Aorta (tissue), 5 donors: ENCODE measurements at regions of chr17 and their contacts with region 1.

Region 1: DNA sequence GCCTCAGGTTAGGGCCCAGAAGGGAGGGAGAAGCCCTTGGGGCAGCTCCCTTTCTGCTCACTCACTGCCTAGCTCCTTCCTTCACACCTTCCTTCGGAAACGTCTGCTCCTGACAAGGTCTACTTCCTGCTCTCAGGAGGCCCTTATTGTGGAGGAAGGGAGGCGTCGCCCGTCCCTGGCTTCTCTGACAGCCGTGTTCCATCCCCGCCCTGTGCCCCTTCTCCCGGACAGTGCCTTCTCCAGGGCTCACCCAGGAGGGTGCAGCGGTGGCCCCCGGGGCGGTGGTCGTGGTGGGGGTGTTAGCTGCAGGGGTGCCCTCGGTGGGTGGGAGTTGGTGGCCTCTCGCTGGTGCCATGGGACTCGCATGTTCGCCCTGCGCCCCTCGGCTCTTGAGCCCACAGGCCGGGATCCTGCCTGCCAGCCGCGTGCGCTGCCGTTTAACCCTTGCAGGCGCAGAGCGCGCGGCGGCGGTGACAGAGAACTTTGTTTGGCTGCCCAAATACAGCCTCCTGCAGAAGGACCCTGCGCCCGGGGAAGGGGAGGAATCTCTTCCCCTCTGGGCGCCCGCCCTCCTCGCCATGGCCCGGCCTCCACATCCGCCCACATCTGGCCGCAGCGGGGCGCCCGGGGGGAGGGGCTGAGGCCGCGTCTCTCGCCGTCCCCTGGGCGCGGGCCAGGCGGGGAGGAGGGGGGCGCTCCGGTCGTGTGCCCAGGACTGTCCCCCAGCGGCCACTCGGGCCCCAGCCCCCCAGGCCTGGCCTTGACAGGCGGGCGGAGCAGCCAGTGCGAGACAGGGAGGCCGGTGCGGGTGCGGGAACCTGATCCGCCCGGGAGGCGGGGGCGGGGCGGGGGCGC is 231.9 kb downstream of the SEC14L1 start:
- DNase-seq: peak; percentile 92 to 95
- ATAC-seq: peak; percentile 79
- H3K4me3 ChIP-seq: peak overlapping the region; percentile 62 to 83
- H3K27ac ChIP-seq: peak overlapping the region; percentile 14 to 56
- H3K4me1 ChIP-seq: peaks cover 0 to 3% of the 10 kb centered on the region in 2 donors
- H3K27me3 ChIP-seq: no peaks in the 10 kb centered on the region

Region 2: DNA sequence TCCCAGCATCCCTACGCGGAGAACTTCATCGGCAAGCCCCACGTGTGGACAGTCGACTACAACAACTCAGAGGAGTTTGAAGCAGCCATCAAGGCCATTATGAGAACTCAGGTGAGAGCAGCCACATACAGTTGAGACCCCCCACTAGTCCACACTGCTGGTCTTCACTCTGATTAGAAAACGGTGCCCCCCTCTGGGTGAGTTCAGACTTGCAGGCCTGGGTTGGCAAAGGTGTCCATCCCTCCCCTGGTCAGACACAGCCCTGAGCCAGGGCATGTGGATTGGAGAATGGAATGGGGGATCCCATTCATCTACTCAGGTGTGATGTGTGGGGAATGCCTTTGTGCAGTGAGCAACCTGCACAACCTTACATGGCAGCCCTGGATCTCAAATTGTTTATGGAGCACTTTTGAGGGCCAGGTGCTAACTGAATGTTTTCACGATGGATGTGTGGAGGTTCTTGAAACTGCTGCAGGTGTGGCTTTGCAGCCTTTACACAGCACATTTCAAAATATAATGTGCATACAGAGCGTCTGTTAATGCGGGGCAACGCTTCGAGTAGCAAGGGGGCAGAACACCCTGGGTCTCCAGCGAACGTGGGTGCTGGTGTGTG is 431.8 kb before region 1 on chr17:
- intact Hi-C with region 1: no loop called
- DNase-seq: no peak
- ATAC-seq: no peak
- H3K4me3 ChIP-seq: no peak overlapping the region
- H3K27ac ChIP-seq: no peak overlapping the region
- H3K4me1 ChIP-seq: no peaks in the 10 kb centered on the region
- H3K27me3 ChIP-seq: no peaks in the 10 kb centered on the region

Region 3: GRCh38 chr17:77325577-77326075 is 47.0 kb before region 1 on chr17:
- intact Hi-C with region 1: loop called (anchors 5 kb)
- DNase-seq: no peak
- ATAC-seq: no peak
- H3K4me3 ChIP-seq: no peak overlapping the region
- H3K27ac ChIP-seq: peak overlapping the region in 1 of 2 donors; percentile 64
- H3K4me1 ChIP-seq: peaks cover 0 to 2% of the 10 kb centered on the region in 2 donors
- H3K27me3 ChIP-seq: no peaks in the 10 kb centered on the region

Region 4: GRCh38 chr17:77404812-77405581 is 32.3 kb after region 1 on chr17:
- intact Hi-C with region 1: loop called in 1 of 2 experiments (anchors 5 kb)
- DNase-seq: peak; percentile 88
- ATAC-seq: no peak
- H3K4me3 ChIP-seq: no peak overlapping the region
- H3K27ac ChIP-seq: peak overlapping the region; percentile 24 to 28
- H3K4me1 ChIP-seq: peaks cover 0 to 8% of the 10 kb centered on the region in 2 donors
- H3K27me3 ChIP-seq: no peaks in the 10 kb centered on the region

Region 5: GRCh38 chr17:77420804-77421629 is 48.3 kb after region 1 on chr17:
- intact Hi-C with region 1: loop called (anchors 5 kb)
- DNase-seq: no peak
- ATAC-seq: no peak
- H3K4me3 ChIP-seq: no peak overlapping the region
- H3K27ac ChIP-seq: no peak overlapping the region
- H3K4me1 ChIP-seq: no peaks in the 10 kb centered on the region
- H3K27me3 ChIP-seq: no peaks in the 10 kb centered on the region

Region 6: GRCh38 chr17:77433385-77434135 is 60.9 kb after region 1 on chr17:
- intact Hi-C with region 1: no loop called
- DNase-seq: no peak
- ATAC-seq: no peak
- H3K4me3 ChIP-seq: no peak overlapping the region
- H3K27ac ChIP-seq: no peak overlapping the region
- H3K4me1 ChIP-seq: no peaks in the 10 kb centered on the region
- H3K27me3 ChIP-seq: no peaks in the 10 kb centered on the region

Region 7: GRCh38 chr17:77489911-77490255 is 117.2 kb after region 1 on chr17:
- intact Hi-C with region 1: no loop called
- DNase-seq: peak; percentile 91 to 95
- ATAC-seq: peak; percentile 90
- H3K4me3 ChIP-seq: no peak overlapping the region
- H3K27ac ChIP-seq: no peak overlapping the region
- H3K4me1 ChIP-seq: no peaks in the 10 kb centered on the region
- H3K27me3 ChIP-seq: no peaks in the 10 kb centered on the region